Right ventricle myocardium inferior (tissue), 1 donor: ENCODE measurements at regions of chr3 and their contacts with region 1.

Region 1: GRCh38 chr3:46078712-46079400 is 51.6 kb upstream of the XCR1 start:
- DNase-seq: peak; percentile 78
- ATAC-seq: peak; percentile 96

Region 2: DNA sequence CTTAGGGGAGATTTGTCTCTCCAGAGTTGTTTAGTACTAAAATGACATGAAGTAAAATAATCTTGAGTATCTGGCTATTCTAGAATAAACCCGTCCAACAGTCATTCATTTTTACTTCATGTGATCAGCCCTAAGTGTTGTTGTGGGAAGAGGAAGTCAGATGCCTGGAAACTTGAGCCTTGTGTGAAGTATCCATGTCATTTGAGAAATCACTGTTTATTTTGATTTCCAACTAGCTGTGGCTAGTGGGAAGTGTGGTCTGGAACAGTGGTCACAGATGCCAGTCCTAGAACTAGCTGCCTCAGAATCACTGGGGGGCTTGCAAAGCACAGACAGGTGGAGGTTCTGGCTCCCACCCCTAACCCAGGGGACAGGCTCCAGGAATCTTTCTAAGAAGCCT is 562.0 kb before region 1 on chr3:
- intact Hi-C with region 1: loop called (anchors 10 kb)
- DNase-seq: no peak
- ATAC-seq: peak; percentile 13

Region 3: DNA sequence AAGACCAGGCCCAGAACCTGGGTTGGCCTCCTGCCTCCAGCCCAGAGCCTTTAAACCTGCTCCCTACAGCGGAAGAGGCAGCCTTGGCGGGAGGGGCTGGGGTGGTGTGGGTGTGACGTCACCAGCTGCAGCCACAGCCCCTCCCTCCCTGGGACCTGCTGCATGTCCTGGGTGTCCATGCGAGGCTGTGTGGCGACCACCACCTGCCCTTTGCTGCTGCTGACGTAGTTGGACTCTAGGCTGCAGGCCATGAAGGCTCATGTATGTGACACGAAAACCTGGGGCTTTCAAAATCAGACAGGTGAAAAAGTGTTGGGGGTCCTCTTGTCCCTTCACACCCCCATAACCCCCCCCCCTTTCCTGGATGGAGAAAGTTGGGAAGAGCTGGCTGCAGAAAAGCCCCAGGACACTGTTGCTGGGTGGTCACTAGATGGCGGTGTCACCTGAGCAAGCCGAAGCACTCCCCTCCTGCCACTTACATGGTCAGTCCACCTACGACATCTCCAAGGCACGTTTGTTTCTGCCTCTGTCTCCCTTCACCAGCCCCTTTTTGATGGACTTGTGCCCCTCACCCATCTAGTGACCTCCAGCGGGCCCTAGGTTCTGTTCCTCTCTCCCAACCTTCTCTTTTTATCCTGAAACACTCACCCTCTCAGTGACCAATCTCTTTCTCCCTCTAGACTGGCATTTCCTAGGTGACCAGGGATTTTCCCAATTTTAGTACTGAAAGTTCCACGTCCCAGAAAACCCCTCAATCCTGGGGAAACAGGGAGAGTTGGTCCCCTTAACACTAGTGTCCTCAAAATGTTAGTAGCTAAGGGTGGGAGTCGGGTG is 317.8 kb before region 1 on chr3:
- intact Hi-C with region 1: loop called (anchors 5 kb)
- DNase-seq: no peak
- ATAC-seq: peak; percentile 75

Region 4: DNA sequence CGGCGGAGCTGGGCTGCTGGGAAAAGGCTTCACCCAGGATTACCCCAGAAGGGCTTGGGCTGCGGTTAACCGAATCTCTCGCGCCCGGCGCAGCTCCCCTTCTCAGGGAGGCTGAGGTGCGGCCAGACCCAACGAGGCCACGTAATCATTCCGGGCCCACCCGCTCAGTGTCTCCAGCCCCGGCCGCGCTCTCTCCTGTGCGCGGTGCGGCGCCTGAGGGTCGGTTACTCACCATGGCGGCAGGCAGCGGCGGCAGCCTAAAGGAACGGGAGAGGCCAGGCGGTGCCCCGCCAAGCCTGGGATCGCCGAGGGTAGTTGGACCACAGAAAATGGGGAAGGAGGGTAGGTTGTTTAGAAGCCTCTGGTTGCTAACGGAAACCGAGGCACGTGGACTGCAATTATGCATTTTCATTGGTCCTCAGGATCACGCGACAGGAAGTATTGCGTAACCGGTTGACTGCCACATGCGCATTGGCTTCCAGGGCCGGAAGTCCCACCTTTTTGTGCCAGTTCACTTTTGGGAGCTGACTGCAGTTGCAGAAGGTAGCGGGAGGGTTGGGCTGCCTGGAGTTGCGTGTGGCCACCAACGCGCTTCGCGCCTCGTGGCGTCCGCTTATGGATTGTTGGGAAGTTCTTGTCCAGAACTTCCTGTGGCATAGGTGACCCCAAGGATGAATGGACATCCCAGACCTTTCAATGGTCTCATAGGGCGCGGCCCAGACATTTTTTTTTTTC is 236.9 kb before region 1 on chr3 and contains the start of gene LZTFL1:
- intact Hi-C with region 1: loop called (anchors 2 kb)
- DNase-seq: peak; percentile 91
- ATAC-seq: peak; percentile 95
- total RNA-seq, gene LZTFL1: 8.9 TPM

Region 5: GRCh38 chr3:45938864-45939263 is 140.0 kb before region 1 on chr3:
- intact Hi-C with region 1: loop called (anchors 1 kb)
- DNase-seq: peak; percentile 78
- ATAC-seq: peak; percentile 74